ENCODE measurements at regions of chr9 and their contacts with region 1.

Region 1: GRCh38 chr9:124852829-124853531 is at the start of gene WDR38:
- DNase-seq: peak; percentile 70
- H3K4me3 ChIP-seq: peak within 1 kb of the TSS; percentile 34 to 65 (median 55)
- H3K27ac ChIP-seq: no peak within 1 kb of the TSS
- H3K4me1 ChIP-seq: peaks cover 19% of the 10 kb centered on the region
- H3K27me3 ChIP-seq: no peaks in the 10 kb centered on the region
- CTCF ChIP-seq: peak; percentile 49 to 80
- total RNA-seq, gene WDR38: not detected

Region 2: DNA sequence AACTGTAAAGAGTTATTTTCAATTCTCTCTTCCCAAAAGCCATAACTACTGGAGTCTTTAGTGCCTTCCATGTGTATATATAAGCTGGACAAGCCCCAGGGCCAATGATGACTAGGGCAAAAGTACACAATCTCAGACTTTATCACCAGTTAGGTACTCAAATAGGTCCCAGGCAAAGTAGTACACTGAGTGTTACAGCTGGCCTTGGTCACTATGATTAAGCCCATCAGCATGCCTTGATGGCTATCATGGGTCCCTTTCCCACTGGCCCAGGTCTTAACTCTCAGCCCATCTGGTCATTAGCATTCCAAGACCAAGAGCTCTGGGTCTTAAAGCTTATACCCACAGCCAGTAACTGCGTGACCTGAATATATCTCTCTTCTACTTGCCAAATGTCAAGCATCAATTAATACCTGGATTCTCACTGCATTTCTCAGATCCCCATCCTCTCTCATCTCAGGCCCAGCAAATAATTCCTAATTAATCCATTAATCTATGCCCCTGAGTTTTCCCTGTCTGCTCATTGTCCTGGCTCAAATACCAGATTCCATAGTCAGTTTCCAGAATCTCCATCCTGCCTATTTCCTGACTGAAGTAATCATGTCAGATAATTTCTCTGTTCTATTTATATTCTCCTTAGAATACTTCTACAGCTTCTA is 144.2 kb before region 1 on chr9:
- CTCF ChIA-PET with region 1: no interaction called
- dilution Hi-C with region 1: no loop called
- in situ Hi-C with region 1: no loop called
- intact Hi-C with region 1: loop called (anchors 1 kb)
- DNase-seq: peak; percentile 20
- H3K4me3 ChIP-seq: no peak overlapping the region
- H3K27ac ChIP-seq: no peak overlapping the region
- H3K4me1 ChIP-seq: peaks cover 11% of the 10 kb centered on the region
- H3K27me3 ChIP-seq: no peaks in the 10 kb centered on the region
- CTCF ChIP-seq: no peak

Region 3: DNA sequence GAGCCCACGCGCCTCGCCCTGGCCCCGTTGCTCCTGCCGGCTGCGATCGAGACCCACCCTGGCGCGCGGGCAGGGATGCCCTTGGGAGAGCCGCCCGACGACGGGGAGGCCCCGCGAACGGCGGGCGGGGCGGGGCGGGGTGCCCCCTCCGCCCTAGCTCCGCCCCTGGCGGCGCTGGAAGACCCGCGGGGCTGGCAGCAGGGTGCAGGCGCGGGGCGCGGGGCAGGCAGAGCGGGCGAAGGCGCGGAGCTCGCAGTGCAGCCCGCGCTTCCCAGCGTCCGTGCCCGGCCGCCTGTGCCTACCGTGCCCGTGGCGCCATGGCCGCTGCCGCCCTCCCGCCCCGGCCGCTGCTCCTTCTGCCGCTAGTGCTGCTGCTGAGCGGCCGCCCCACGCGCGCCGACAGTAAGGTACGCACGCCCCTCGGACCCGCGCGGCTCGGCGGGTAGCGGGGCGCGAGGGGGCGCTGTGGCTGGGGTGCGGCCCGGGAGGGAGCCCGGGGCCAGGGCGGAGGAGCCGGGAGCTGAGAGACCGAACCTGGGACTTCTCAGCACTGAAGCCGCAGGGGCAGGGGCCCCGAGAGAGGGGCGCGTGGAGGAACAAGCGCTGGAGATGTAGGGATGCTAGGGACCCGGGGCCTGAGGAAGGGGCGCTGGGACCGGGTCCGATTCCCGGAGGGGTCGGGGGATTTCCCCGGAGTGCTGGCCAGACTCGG is 75.9 kb before region 1 on chr9 and contains the start of gene OLFML2A:
- CTCF ChIA-PET with region 1: interaction called, 32 read pairs
- dilution Hi-C with region 1: loop called (anchors 5 kb)
- in situ Hi-C with region 1: loop called (anchors 5 kb)
- intact Hi-C with region 1: loop called (anchors 1 kb)
- DNase-seq: no peak
- H3K4me3 ChIP-seq: peak within 1 kb of the TSS; percentile 33 to 61 (median 58)
- H3K27ac ChIP-seq: no peak within 1 kb of the TSS
- H3K4me1 ChIP-seq: peaks cover 29% of the 10 kb centered on the region
- H3K27me3 ChIP-seq: no peaks in the 10 kb centered on the region
- CTCF ChIP-seq: peak in 1 of 2 donors; percentile 40
- total RNA-seq, gene OLFML2A: 4.2 to 6.2 TPM

Region 4: DNA sequence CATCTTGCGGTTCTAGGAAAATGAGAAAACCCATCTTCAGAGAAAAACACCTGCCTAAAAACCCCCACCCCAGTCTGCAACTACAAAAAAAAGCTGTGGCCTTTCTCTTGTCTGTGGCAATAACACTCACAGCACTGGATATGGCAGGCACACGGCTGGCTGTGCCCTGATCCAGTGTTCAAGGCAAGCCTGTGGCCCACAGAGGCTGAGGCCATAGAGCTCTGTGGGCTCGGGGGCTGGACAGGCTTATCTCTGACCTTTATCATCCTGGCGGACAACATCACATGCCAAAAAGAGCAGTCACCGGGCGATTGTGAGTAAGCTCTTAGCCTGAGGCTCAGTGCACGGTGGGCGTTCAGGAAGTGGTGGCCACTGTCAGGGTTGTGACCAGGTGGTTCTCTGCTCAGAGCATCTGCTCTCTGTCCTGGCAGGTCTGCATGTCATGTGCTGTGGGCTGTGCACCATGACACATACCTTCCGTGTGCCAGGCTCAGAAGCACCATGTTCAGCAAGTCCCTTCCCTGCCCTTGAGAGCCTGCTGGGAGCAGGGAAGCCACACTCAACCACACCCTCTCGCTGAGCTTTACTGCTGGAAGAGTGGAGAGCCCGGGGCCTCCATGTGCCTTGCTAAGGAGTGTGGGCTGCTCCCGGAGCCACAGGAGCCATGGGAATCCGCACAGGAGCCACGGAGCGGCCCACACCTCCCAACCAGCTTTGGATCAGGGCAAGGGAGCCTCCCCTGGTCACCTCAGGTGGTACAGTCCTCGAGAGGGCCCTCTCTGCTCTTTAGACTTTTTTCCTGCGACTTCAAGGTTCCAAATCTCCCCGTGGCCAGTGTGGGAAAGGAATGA is 34.3 kb before region 1 on chr9:
- CTCF ChIA-PET with region 1: no interaction called
- dilution Hi-C with region 1: no loop called
- in situ Hi-C with region 1: no loop called
- intact Hi-C with region 1: loop called (anchors 2 kb)
- DNase-seq: peak; percentile 96
- H3K4me3 ChIP-seq: peak overlapping the region in 1 of 3 experiments; percentile 0
- H3K27ac ChIP-seq: peak overlapping the region; percentile 61
- H3K4me1 ChIP-seq: peaks cover 41% of the 10 kb centered on the region
- H3K27me3 ChIP-seq: no peaks in the 10 kb centered on the region
- CTCF ChIP-seq: peak in 1 of 2 donors; percentile 15

Region 5: GRCh38 chr9:124906966-124907365 is 54.0 kb after region 1 on chr9:
- CTCF ChIA-PET with region 1: interaction called, 23 read pairs
- dilution Hi-C with region 1: no loop called
- in situ Hi-C with region 1: no loop called
- intact Hi-C with region 1: no loop called
- DNase-seq: no peak
- H3K4me3 ChIP-seq: no peak overlapping the region
- H3K27ac ChIP-seq: no peak overlapping the region
- H3K4me1 ChIP-seq: no peaks in the 10 kb centered on the region
- H3K27me3 ChIP-seq: no peaks in the 10 kb centered on the region
- CTCF ChIP-seq: no peak